Common myeloid progenitor, CD34-positive (primary cell): ENCODE measurements at regions of chr11 and their contacts with region 1.

Region 1: GRCh38 chr11:61695917-61696316 is 15.7 kb downstream of the DAGLA start:
- DNase-seq: peak; percentile 88 to 98 (median 97)
- H3K4me3 ChIP-seq: peak overlapping the region in 3 of 7 experiments; percentile 38 to 53 (median 46)
- H3K27ac ChIP-seq: peak overlapping the region; percentile 33 to 68
- H3K4me1 ChIP-seq: peaks cover 7 to 69% (median 47%) of the 10 kb centered on the region in 4 experiments
- H3K27me3 ChIP-seq: no peaks in the 10 kb centered on the region

Region 2: DNA sequence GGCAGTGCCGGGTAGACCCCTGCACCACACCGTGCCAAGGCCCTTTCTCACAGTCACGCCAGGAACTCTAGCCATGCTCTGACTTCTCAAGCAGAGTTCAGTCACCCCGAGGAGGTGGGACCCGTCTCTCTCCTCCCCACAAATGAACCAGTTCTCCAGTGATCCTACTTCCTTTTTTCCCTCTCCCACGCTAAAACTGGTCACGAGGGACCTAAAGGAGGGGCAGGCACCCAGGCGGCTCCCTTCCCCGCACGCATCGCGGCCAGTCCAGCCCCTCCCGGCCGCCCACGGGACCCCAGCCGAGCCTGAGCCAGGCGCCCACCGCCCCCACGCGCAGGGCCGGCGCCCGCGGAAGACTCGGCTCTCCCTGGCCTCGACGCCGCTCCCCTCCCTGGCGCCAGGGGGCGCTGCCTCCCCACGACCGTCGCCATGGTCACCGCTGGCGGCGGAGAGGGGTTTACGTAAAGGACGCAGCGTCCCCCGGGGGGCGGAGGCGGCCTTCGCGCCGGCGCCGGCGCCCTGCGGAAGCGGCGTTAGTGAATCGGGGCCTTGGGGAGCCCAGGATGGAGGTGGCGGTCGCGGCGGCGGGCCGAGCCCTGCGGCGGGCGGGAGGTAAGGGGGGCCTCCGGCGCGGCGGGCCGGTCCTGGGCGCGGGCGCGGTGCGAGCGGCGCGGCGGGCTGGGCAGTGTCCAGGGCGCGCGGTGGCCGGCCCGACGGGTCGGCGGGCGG is 15.9 kb before region 1 on chr11 and contains the start of gene DAGLA:
- CTCF ChIA-PET with region 1: interaction called, 20 read pairs
- POLR2A ChIA-PET with region 1: interaction called, 4 read pairs
- DNase-seq: peak; percentile 54 to 77 (median 76)
- H3K4me3 ChIP-seq: peak within 1 kb of the TSS; percentile 5 to 70 (median 44)
- H3K27ac ChIP-seq: no peak within 1 kb of the TSS
- H3K4me1 ChIP-seq: peaks cover 0 to 29% (median 18%) of the 10 kb centered on the region in 4 experiments
- H3K27me3 ChIP-seq: peaks cover 3 to 67% (median 43%) of the 10 kb centered on the region in 5 experiments